Colonic mucosa (tissue), 4 donors: ENCODE measurements at regions of chr6 and their contacts with region 1.

Region 1: DNA sequence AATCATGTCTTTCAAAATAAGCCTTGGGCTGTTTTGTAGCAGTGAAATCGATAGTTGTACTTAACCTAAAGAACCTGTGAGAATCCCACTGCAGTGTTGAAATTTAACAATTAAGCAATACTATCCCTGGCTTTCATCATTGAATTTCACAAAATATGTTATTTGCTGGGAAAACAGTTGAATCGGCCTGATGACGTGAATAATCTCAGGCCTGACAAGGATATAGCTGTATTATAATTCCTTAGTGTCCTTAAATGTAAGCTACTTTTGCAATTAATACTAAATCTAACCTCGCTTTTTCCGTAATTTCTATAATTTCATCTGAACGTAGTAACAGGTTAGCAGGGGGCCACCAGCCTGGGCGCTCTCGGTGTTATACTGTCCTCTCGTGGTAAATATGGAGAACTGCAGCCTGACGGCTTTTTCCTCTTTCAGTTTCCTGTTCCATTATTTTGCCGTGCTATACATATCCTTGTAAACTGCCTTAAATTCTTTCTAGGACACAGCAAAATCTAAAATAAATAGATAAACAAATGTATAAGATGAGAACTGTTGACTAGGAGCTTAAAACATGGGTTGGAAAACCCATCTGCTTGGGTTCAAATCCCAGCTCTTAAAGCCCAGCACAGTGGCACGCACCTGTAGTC is 24.0 kb downstream of the MTFR2 start:
- DNase-seq: peak; percentile 56
- H3K4me3 ChIP-seq: peak overlapping the region; percentile 20
- H3K27ac ChIP-seq: peak overlapping the region; percentile 21
- H3K4me1 ChIP-seq: no peaks in the 10 kb centered on the region
- H3K27me3 ChIP-seq: no peaks in the 10 kb centered on the region
- CTCF ChIP-seq: peak; percentile 100

Region 2: DNA sequence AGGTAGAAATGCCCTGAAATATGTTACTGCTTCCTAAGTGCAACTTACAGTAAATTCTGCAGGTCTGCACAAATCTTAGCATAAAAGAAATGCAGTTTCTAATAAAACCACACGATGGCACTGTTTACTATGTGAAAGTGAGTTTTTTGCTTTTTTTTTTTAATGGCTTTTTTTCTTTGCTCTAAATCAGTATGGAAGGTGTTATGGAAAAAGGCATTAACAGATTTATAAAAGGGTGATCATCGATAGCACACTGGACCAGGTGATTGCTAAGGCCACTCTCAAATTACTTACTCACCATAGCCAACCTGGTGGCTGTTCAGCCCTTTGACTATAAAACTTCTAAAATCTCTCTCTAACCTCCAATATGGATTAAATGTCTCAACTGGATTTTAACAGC is 774.5 kb before region 1 on chr6:
- intact Hi-C with region 1: loop called (anchors 10 kb)
- DNase-seq: no peak
- H3K4me3 ChIP-seq: no peak overlapping the region
- H3K27ac ChIP-seq: no peak overlapping the region
- H3K4me1 ChIP-seq: no peaks in the 10 kb centered on the region
- H3K27me3 ChIP-seq: no peaks in the 10 kb centered on the region
- CTCF ChIP-seq: peak; percentile 59

Region 3: DNA sequence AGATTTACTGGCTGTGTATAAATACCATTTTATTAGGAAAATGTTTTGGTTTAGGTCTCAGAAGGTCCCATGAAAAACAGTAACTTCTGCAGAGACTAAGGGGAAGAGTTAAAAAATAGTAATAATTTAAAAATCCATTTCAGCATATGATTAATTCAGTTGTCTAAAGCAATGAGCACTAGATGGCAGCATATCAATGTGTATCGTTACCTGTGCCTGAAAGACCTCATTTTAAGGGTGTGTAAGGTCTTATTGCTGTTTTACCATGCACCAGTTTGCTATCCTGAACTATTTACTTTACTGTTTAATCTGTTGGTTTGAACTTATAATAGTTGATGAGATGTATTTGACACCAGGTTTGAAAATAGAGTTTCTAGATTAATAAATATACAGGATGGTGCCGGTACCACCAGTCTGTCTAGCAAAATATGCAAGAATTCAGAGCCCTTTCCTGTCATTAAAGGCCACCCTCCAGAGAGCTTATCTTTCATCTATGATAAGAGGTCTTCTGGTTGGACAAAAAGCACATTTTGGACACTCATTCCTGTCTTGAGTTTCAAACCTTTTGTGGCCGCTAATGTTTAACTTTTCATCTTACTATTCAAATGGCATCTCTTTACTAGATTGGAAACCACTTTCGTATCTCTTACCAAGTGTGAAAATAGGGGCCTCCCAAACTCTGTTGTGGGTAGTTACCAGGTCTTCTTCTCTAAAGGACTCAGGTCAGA is 719.7 kb before region 1 on chr6:
- intact Hi-C with region 1: loop called (anchors 10 kb)
- DNase-seq: no peak
- H3K4me3 ChIP-seq: no peak overlapping the region
- H3K27ac ChIP-seq: peak overlapping the region; percentile 77
- H3K4me1 ChIP-seq: no peaks in the 10 kb centered on the region
- H3K27me3 ChIP-seq: no peaks in the 10 kb centered on the region
- CTCF ChIP-seq: peak; percentile 59

Region 4: DNA sequence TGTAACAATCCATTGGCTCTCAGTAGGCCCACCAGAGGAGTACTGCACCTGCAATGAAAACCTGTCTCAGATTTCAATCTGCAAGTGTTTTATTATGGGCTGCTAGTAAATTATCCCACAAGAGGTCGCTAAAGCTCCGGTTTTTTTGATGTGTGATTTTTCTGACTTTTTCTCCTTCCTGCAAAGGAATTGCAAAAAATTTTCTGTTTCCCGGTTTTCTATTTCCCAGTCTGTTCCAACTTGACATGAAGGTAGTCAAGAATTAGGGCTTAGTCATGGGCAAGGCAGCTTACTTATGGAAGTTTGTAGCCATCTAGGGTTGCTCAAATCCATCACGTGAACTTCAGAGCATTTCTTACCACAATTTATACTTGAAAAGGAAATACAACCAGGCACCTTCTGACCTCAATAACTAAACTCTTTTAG is 690.1 kb before region 1 on chr6:
- intact Hi-C with region 1: loop called (anchors 5 kb)
- DNase-seq: no peak
- H3K4me3 ChIP-seq: no peak overlapping the region
- H3K27ac ChIP-seq: no peak overlapping the region
- H3K4me1 ChIP-seq: no peaks in the 10 kb centered on the region
- H3K27me3 ChIP-seq: no peaks in the 10 kb centered on the region
- CTCF ChIP-seq: peak; percentile 50

Region 5: DNA sequence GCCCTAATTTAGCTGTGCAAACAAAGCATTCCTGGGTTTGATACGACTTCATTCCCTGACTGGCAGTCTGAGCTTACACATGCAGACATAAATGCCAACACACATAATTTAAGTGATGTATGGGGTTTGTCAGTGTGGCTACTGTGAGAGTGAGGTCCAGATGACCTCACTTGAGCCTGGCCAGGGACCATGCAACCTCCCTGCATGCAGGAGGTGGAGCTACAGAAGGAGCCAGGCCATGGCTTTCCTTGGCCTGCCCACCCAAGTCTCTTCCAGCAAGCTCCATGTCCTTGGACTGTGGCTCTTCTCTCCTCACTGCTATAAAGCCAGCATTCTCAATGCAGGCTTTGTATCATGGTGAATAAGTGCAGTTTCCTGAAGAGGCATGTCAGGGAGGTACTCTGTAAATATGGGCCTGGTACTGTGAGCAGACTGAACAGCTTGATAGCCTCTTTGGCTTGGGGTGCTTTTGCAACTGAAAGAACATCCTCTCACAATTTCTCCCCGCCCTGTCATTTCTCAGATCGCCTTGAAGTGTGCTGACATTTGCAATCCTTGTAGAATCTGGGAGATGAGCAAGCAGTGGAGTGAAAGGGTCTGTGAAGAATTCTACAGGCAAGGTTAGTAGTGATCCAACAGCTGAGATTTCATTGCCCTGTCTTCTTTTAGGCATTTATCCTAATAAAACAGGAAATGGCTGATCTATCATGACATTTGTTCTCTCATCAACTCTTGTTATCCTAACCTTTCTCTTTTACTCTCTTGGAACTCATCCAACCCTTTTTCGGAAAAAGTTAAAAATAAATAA is 45.2 kb before region 1 on chr6:
- intact Hi-C with region 1: no loop called
- DNase-seq: no peak
- H3K4me3 ChIP-seq: no peak overlapping the region
- H3K27ac ChIP-seq: no peak overlapping the region
- H3K4me1 ChIP-seq: no peaks in the 10 kb centered on the region
- H3K27me3 ChIP-seq: no peaks in the 10 kb centered on the region
- CTCF ChIP-seq: no peak